Pancreas (tissue), 10 donors: ENCODE measurements at regions of chr16 and their contacts with region 1.

Region 1: DNA sequence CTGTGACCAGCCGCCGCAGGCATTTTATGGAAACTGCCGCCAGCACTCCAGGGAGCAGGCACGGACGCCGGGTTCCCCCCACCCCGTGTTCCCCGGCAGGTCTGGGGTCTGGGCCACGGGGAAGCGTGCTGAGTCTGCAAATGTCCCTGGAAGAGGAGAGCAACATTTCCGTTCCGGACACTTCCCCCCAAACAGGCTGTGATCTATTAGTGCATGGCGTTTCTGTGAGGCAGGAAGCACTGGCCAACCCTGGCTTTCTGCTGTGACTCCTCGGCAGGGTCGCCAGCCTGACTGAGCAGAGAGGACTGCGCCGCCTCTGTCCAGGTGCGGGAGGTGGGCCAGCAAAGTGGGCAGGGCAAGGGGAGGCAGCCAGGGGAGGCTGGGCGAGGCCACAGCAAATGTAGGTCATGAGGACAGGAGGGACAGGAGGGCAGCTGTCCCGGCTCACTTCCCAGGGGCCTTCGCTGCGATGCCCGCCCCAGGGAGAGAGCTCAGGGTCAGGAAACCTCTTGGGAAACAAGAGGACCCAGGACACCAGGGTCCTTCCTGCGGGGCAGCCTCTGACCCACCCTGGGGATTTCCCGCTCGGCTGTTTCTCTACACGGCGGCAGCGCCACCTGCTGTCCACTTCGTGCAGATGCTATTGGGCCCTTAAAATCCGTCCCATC is 9.5 kb downstream of the FOXF1 start:
- DNase-seq: peak in 4 of 6 donors; percentile 15 to 84 (median 41)
- ATAC-seq: peak; percentile 47 to 75 (median 68)
- H3K4me3 ChIP-seq: no peak overlapping the region
- H3K27ac ChIP-seq: no peak overlapping the region
- H3K4me1 ChIP-seq: no peaks in the 10 kb centered on the region
- H3K27me3 ChIP-seq: peaks cover 0 to 35% (median under 1%) of the 10 kb centered on the region in 4 donors
- CTCF ChIP-seq: peak; percentile 73 to 88 (median 82)

Region 2: DNA sequence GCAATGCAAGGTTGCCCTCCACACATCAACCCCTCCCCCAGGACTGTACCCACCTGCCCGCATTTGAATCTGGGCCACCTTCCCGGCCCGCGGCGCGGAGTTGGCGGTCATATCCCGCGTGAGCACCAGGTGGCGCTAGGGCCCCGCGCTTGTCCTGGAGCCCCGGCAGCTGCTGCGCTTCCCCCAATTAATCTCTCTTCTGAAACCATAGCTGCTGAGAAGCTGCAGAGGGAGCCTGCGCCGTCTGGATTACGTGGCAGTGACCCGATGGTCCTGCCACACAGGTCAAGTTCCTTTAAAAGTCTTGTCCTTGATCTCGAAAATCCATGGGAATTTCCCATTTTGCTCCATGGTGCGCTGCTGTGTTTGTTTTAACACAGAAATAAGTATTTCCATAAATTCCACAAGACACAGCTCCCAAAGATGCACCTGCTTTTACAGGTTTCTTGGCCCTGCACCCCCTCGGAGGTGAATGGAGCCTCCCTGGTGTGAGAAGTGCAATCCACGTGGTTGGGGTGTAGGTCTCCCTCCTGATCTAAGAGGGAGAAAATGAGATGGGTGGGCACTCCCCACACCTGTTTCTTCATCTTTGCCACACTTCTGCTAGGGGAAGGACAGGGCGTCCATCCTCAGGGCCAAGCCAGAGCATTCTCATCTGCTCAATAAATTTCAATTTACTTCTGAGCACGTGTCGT is 698.2 kb before region 1 on chr16:
- intact Hi-C with region 1: loop called in 1 of 3 experiments (anchors 5 kb)
- DNase-seq: peak; percentile 71 to 93 (median 84)
- ATAC-seq: peak; percentile 86 to 97 (median 96)
- H3K4me3 ChIP-seq: no peak overlapping the region
- H3K27ac ChIP-seq: no peak overlapping the region
- H3K4me1 ChIP-seq: no peaks in the 10 kb centered on the region
- H3K27me3 ChIP-seq: peaks cover 0 to 4% (median 0%) of the 10 kb centered on the region in 4 donors
- CTCF ChIP-seq: peak; percentile 94 to 96 (median 94)

Region 3: DNA sequence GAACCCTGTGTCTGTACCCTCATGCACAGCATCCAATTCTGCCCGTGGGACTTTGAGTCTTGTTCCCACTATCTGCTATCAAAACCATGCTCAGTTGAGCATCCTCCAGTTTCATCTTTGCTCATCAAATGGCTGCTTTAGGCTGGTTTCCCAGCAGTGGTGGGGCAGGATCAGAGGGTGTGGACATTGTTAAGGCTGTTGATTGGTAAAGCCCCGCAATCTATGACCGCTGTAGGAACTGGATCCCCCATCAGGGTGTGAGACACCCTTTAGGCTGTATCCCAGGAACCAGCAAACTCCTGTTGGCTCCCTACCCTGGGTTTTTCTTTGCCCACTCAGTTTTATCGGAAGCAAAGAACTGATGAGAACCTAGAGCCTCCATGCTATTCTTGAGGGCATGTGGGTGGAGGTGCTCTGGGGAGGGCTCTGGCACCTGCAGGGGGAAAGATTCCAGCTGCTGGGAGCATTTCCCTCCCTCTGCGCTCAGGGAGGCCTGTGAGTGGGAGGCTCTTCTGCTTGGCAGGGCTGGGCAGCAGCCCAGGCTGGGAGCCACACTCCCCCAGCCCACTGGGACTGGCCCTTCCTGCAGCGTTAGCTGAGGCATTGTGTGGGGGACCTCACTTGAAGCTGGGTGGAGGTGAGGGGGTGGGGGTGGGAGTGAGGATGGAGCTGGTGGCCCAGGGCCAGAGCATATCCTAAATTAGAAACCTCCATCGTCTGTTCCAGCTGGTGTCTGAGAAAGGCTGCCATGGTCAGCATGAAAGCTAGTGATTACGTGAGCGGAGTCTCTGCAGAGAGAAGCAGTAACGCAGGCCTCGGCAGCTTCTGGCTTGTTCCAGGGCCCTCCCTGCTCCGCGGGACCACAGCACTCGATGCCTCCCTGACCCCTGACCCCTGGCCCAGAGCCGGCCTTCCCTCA is 460.3 kb before region 1 on chr16:
- intact Hi-C with region 1: loop called in 1 of 3 experiments (anchors 10 kb)
- DNase-seq: peak in 2 of 6 donors; percentile 42 to 50
- ATAC-seq: peak in 3 of 4 donors; percentile 30 to 57 (median 54)
- H3K4me3 ChIP-seq: no peak overlapping the region
- H3K27ac ChIP-seq: no peak overlapping the region
- H3K4me1 ChIP-seq: no peaks in the 10 kb centered on the region
- H3K27me3 ChIP-seq: no peaks in the 10 kb centered on the region
- CTCF ChIP-seq: no peak

Region 4: DNA sequence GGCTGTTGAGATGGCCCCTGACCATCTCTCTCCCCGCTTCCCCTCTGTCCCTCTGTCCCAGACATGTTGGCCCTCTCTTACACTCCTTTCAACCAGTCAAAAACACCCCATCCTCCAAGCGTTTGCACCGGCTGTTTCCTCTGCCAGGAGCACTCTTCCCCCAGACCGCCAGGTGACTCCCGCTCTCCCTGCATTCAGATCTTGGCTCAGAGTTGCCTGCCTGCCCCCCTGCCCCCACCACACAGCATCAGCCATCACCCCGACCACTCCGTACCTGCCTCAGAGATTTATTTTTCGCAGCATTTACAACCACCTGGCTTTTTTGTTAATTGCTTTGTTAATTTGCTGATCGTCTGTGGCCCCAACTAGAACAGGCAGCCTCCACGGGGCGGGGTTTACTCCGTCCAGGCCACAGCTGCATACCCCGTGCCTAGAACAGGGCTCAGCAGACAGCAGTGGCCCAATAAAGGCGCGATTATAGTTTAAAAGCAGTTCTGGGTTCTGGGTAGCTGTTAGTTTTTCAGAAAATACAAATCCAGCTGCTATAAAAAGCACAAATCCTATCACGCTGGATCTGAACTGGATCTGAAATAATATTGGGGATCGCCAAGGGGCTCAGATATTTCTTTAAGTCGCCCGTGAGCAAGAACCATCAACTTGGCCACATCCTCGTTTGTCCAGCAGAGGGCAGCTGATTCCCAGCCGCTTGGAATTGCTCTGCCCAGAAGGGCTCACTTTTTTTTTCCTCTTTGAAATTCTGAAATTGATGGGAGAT is 447.3 kb before region 1 on chr16:
- intact Hi-C with region 1: loop called (anchors 5 to 10 kb)
- DNase-seq: peak; percentile 31 to 77 (median 65)
- ATAC-seq: peak; percentile 76 to 84 (median 82)
- H3K4me3 ChIP-seq: no peak overlapping the region
- H3K27ac ChIP-seq: no peak overlapping the region
- H3K4me1 ChIP-seq: no peaks in the 10 kb centered on the region
- H3K27me3 ChIP-seq: no peaks in the 10 kb centered on the region
- CTCF ChIP-seq: peak; percentile 61 to 73 (median 68)

Region 5: GRCh38 chr16:86242244-86243122 is 277.3 kb before region 1 on chr16:
- intact Hi-C with region 1: no loop called
- DNase-seq: no peak
- ATAC-seq: no peak
- H3K4me3 ChIP-seq: no peak overlapping the region
- H3K27ac ChIP-seq: no peak overlapping the region
- H3K4me1 ChIP-seq: no peaks in the 10 kb centered on the region
- H3K27me3 ChIP-seq: no peaks in the 10 kb centered on the region
- CTCF ChIP-seq: no peak

Region 6: DNA sequence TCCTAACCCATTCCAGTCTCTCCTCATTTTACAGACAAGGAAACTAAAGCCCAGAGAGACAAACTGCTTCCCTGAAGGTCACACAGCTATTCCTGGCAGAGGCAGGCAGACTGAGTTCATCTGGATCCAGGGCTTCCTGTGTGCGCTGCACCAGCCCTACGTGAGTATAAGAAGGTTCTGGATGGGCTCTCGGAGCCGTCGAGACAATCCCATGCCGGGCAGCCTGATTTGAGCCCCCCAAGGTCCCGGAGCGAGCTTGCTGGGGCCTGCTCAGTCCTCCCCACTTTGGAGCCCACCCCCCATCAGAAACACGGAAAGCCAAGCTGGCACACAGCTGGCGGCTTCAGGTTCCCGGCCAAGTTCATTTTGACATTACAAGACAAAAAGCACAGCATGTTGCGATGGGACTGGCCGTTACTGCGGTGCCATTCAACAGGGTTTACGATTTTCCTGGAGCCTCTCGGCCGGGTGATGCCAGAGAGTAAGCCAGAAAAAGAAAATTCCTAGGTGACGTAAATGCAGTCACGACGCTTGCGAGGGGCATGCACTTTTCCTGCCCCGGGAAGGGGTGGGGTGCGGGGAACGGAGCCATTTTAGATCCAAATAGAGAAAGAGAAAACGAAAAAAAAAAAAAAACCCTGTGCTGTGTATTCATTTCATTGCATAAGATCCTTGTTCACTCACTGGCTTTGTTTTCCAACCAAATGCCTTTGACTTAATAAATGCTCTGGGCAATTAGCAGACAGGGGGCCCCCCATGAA is 176.6 kb before region 1 on chr16:
- intact Hi-C with region 1: loop called in 1 of 3 experiments (anchors 5 kb)
- DNase-seq: no peak
- ATAC-seq: no peak
- H3K4me3 ChIP-seq: no peak overlapping the region
- H3K27ac ChIP-seq: peak overlapping the region in 1 of 4 donors; percentile 23
- H3K4me1 ChIP-seq: no peaks in the 10 kb centered on the region
- H3K27me3 ChIP-seq: peaks cover 0 to 9% (median 0%) of the 10 kb centered on the region in 4 donors
- CTCF ChIP-seq: no peak

Region 7: GRCh38 chr16:86444261-86444660 is 75.5 kb before region 1 on chr16:
- intact Hi-C with region 1: no loop called
- DNase-seq: no peak
- ATAC-seq: no peak
- H3K4me3 ChIP-seq: no peak overlapping the region
- H3K27ac ChIP-seq: no peak overlapping the region
- H3K4me1 ChIP-seq: no peaks in the 10 kb centered on the region
- H3K27me3 ChIP-seq: no peaks in the 10 kb centered on the region
- CTCF ChIP-seq: no peak

Region 8: DNA sequence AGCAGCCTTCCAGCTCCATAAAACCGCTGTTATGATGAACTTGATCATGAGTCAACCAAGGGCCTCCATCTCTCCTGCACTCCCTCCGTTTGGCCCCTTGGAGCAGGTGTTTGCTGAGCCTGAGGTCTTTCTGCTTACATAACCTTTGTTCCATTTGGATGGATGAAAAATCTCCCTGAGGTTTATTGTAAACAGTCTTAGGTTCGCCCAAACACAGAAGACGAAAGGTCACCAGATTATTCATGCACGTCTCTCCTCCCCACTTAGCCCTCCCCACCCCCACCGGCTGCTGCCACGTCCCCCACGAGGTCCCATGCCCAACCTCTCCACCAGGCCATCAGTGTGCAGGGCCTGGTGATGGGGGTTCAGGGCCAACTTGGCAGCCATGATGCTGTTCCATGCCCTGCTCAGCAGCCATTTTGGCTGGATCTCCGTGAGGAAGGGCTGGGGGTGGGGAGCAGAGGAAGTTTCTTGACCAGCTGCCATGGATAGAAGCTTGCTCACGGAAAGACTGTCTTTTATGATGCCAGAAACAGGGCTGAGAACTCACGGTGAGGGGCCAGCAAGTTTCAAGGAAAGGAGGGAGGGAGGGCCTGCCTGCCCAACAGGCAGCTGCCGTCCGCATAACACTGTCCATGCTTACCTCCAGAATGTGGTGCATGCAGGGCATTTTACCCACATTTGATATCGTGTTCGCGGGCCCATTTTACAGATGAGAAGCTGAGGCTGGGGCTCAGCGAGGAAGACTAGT is 57.3 kb before region 1 on chr16:
- intact Hi-C with region 1: loop called in 1 of 3 experiments (anchors 10 kb)
- DNase-seq: no peak
- ATAC-seq: no peak
- H3K4me3 ChIP-seq: no peak overlapping the region
- H3K27ac ChIP-seq: no peak overlapping the region
- H3K4me1 ChIP-seq: no peaks in the 10 kb centered on the region
- H3K27me3 ChIP-seq: no peaks in the 10 kb centered on the region
- CTCF ChIP-seq: no peak